Activated CD8-positive, alpha-beta T cell treated with anti-CD3 and anti-CD28 coated beads for 36 hours (primary cell): ENCODE measurements at regions of chr1 and their contacts with region 1.

Region 1: DNA sequence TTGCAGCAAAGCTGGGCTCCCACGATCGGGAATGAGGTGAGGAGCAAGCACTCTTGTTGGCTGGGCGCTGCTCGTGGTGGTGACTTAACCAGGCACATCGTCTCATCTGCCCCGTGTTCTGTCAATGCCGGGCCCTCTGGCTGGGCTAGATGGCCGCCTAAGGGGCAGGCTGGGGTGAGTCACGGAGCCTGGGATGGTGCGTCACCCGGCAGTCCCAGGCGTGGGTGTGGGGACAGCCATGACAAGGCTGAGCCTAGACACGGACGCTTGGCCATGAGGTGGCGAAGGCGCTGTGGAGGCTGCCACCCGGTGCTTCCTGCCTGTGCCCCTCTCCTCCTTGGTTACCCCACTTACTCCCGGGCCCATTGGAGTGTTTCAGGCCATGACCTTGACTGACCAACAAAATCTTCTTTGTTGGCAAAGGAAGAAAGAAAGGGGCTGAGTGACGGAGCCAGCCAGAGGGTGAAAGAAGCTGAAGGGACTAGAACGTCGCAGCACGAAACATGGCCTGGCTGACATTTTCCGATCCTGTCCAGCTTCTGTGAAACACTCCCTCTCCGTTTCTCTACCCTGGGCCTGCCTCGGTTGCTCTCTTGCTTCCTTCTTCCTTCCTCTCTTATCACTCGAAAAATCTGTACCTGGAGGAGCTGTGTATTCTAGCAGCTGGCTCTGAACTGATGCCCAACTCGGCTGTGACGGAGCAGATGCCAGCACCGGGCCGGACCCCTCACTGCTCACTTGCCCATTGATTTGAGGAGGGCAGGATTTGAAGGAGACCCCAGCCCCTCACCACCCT is 596 bp downstream of the CD247 start:
- DNase-seq: peak; percentile 98
- ATAC-seq: peak; percentile 87
- H3K4me3 Mint-ChIP-seq: peak overlapping the region; percentile 100
- H3K27ac Mint-ChIP-seq: peak overlapping the region; percentile 100
- H3K4me1 Mint-ChIP-seq: peaks cover 24% of the 10 kb centered on the region
- H3K27me3 Mint-ChIP-seq: no peaks in the 10 kb centered on the region
- CTCF ChIP-seq: no peak

Region 2: GRCh38 chr1:167003711-167004110 is 514.0 kb before region 1 on chr1:
- CTCF ChIA-PET with region 1: no interaction called
- POLR2A ChIA-PET with region 1: no interaction called
- intact Hi-C with region 1: no loop called
- DNase-seq: no peak
- ATAC-seq: no peak
- H3K4me3 Mint-ChIP-seq: no peak overlapping the region
- H3K27ac Mint-ChIP-seq: no peak overlapping the region
- H3K4me1 Mint-ChIP-seq: peaks cover 8% of the 10 kb centered on the region
- H3K27me3 Mint-ChIP-seq: peaks cover 12% of the 10 kb centered on the region
- CTCF ChIP-seq: no peak

Region 3: DNA sequence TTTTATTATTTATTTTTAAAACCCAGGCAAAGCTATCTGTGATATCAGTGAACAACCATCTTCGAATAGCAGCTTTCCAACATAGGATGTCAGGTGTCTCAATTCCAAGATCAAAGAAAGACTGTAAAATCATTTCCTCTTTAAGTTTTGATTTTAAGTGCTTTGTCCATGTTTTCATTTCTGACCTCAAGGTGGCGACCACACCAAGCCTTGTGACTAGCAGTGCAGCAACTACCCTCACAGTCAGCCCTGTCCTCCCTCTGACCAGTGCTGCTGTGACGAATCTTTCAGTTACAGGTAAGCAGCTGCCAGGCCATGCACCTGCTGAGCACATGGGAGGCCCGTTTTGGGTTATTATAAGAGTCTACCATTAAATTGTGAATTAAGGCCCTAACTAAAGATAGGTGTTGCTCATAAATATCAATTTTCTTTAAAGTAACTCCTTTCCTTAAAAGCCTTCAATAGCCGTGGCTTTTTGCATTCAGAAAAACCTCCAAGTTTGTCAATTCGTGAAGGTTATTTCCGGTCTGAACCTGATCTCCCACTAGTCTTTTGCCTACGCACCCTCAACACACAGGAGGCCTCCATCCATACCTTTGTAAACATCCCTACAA is 116.4 kb before region 1 on chr1:
- CTCF ChIA-PET with region 1: interaction called, 11 read pairs
- POLR2A ChIA-PET with region 1: no interaction called
- intact Hi-C with region 1: no loop called
- DNase-seq: peak; percentile 69
- ATAC-seq: peak; percentile 77
- H3K4me3 Mint-ChIP-seq: no peak overlapping the region
- H3K27ac Mint-ChIP-seq: no peak overlapping the region
- H3K4me1 Mint-ChIP-seq: peaks cover 2% of the 10 kb centered on the region
- H3K27me3 Mint-ChIP-seq: no peaks in the 10 kb centered on the region
- CTCF ChIP-seq: peak; percentile 68

Region 4: GRCh38 chr1:167447521-167448136 is 70.1 kb before region 1 on chr1:
- CTCF ChIA-PET with region 1: interaction called, 69 read pairs
- POLR2A ChIA-PET with region 1: interaction called, 50 read pairs
- intact Hi-C with region 1: no loop called
- DNase-seq: peak; percentile 90
- ATAC-seq: peak; percentile 82
- H3K4me3 Mint-ChIP-seq: peak overlapping the region; percentile 65
- H3K27ac Mint-ChIP-seq: peak overlapping the region; percentile 91
- H3K4me1 Mint-ChIP-seq: peaks cover 82% of the 10 kb centered on the region
- H3K27me3 Mint-ChIP-seq: no peaks in the 10 kb centered on the region
- CTCF ChIP-seq: no peak

Region 5: DNA sequence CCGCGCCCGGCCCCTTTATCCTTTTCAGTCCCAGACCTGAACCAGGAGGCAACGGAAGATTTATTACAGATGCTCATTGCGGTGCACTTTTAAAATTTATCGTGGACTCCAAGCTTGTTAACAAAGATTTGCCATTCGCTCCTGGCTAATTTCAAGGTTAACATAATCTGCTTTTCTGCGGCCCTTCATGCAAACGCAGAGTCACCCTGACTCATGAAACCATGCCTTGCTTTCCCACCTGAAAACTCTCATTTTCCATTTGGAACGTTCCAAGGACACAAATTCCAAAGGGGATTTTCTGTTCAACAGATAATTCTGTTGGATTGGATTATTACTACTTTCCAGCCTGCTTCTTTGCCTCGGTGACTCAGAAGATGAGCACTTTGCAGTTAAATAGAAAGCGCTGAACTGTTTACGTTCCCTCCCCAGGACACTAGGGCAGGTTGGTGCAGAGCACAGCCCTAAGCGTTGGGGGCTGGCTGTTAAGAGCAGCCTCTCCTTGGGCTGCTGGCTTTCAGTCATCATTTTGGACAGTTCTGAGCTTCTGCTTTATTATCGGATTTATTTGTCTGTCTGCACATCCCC is 50.5 kb before region 1 on chr1:
- CTCF ChIA-PET with region 1: interaction called, 3 read pairs
- POLR2A ChIA-PET with region 1: interaction called, 13 read pairs
- intact Hi-C with region 1: no loop called
- DNase-seq: no peak
- ATAC-seq: peak; percentile 58
- H3K4me3 Mint-ChIP-seq: no peak overlapping the region
- H3K27ac Mint-ChIP-seq: peak overlapping the region; percentile 2
- H3K4me1 Mint-ChIP-seq: peaks cover 80% of the 10 kb centered on the region
- H3K27me3 Mint-ChIP-seq: no peaks in the 10 kb centered on the region
- CTCF ChIP-seq: no peak

Region 6: DNA sequence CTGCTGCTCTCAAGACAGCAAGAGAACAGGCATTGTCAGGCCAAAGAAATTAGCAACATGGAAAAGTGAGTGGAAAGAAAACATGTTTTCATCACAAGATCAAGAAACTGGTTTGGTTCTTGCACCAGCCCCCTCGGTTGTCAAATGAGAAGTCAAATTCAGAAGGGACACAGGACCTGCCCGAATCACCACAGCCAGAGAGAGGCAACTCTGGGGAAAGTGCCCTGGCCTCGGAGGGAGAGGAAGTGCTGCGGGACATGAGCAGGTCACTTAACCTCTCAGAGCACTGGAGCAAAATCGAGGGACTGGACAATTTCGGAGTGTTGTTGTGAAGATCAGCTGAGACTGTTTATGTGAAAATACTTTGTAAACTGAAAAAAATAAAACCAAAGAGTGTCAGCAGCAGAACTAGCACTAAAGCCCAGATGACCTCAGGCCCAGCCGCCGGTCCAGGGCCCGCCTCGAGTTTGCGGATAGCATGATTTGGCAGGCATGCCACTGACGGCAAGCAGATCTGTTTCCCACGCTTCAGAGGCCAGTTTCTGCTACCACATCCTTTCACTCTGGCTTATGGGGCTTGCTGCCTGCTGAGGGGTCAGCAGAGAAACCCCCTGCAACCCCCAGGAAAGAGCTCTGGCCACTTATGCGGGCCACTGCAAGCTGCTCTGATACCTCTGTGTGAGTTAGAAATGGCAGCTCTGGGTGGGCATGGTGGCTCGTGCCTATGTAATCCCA is 31.5 kb before region 1 on chr1:
- CTCF ChIA-PET with region 1: interaction called, 18 read pairs
- POLR2A ChIA-PET with region 1: interaction called, 76 read pairs
- intact Hi-C with region 1: loop called (anchors 5 kb)
- DNase-seq: peak; percentile 62
- ATAC-seq: no peak
- H3K4me3 Mint-ChIP-seq: peak overlapping the region; percentile 56
- H3K27ac Mint-ChIP-seq: peak overlapping the region; percentile 93
- H3K4me1 Mint-ChIP-seq: peaks cover 94% of the 10 kb centered on the region
- H3K27me3 Mint-ChIP-seq: no peaks in the 10 kb centered on the region
- CTCF ChIP-seq: no peak

Region 7: DNA sequence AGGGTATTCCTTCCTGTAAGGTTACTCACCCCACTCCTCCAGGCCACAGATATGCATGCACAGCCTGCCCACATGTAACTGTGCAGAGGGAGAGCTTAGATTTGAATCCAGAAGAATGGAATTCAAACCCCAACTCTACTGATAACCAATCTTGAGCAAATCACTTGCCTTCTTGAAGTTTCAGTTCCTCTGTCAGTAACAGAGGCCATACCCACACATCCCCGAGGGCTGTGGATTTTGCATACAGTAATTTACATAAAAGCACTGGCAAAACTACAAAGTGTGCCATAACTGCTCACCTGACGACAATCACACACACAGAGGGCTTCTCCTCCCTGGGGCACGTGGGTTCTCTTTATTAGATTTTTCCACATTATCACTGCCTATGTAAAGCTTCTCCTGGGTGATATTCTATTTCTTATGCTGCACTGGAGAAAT is 18.1 kb before region 1 on chr1:
- CTCF ChIA-PET with region 1: interaction called, 62 read pairs
- POLR2A ChIA-PET with region 1: interaction called, 148 read pairs
- intact Hi-C with region 1: loop called (anchors 2 kb)
- DNase-seq: peak; percentile 70
- ATAC-seq: peak; percentile 40
- H3K4me3 Mint-ChIP-seq: peak overlapping the region; percentile 29
- H3K27ac Mint-ChIP-seq: peak overlapping the region; percentile 97
- H3K4me1 Mint-ChIP-seq: peaks cover 98% of the 10 kb centered on the region
- H3K27me3 Mint-ChIP-seq: no peaks in the 10 kb centered on the region
- CTCF ChIP-seq: no peak

Region 8: GRCh38 chr1:167542109-167543032 is 24.6 kb after region 1 on chr1:
- CTCF ChIA-PET with region 1: interaction called, 22 read pairs
- POLR2A ChIA-PET with region 1: interaction called, 5 read pairs
- intact Hi-C with region 1: no loop called
- DNase-seq: no peak
- ATAC-seq: peak; percentile 32
- H3K4me3 Mint-ChIP-seq: no peak overlapping the region
- H3K27ac Mint-ChIP-seq: peak overlapping the region; percentile 2
- H3K4me1 Mint-ChIP-seq: peaks cover 28% of the 10 kb centered on the region
- H3K27me3 Mint-ChIP-seq: no peaks in the 10 kb centered on the region
- CTCF ChIP-seq: no peak